ENCODE measurements at regions of chr22 and their contacts with region 1.

Region 1: GRCh38 chr22:36387752-36388518 is at the start of gene MYH9:
- DNase-seq: peak; percentile 96 to 100 (median 100)

Region 2: DNA sequence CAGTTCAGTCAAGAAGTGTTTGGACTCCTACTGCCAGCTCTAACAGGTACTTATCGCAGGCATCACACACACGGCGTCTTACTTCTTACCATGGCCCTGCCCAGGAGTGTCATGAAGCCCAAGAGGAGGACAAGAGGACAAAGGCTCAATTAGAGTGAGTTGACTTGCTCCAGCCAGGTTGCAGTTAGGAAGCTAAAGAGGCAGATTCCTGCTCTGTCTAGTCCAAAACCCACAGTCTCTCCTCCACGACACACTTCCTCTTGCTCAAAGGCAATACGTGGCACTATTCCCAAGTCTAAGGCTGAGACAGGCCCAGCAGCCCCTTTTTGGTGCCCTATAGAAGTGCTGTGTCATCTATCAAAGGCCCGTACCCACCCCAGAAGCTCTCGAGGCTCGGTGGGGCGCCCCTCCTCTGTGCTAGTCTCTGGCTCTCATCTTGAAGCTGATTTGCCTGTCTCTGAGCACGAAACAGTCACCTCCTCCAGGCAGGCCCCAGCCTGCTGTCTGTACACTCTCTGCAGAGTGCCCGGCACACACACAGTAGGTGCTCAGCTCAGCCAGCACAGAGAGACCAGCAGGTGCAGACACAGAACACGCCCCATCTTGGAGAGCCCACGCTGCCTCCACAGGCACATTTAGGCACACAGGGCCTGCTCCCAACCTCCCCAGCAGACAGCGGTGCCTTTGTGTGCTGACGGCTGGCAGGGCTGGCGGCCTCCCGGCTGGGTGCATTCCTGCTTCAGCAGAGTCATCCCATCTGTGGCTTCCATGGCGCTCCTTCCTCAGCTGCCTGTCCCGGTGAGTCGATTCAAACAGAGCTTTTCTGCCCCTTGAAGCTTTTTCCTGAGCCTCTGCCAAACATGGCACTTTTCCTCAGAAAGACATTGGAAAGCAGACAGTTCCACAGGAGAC is 53.0 kb before region 1 on chr22:
- intact Hi-C with region 1: loop called (anchors 5 kb)
- DNase-seq: peak; percentile 70 to 92 (median 84)

Region 3: DNA sequence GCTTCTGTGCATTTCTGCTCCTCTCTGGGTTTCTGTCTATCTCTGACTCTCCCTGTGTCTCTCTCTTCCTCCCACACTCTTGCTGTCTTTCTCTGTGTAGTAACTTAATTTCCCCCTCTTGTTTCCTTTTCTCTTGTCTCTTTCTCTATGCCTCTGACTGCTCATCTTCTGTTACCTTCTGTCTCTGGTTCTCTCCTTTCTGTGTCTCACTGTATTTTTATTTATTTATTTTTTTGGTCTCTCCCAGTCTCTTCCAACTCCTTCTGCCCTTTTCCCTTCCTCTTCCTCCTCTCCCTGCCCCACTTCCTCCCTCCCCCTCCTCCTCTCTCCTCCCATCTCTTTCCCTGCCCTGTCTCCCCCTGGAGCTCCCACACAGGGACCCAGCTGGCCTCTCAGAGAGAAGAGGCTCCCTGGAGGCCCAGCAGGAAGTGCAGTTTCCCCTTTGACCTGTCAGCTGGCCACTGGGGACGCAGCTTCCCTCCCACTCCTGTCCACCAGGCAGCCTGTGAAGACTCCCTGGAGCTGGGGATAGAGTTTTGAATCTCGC is 38.1 kb after region 1 on chr22:
- intact Hi-C with region 1: no loop called
- DNase-seq: peak in 4 of 42 donors; percentile 9 to 47 (median 34)

Region 4: DNA sequence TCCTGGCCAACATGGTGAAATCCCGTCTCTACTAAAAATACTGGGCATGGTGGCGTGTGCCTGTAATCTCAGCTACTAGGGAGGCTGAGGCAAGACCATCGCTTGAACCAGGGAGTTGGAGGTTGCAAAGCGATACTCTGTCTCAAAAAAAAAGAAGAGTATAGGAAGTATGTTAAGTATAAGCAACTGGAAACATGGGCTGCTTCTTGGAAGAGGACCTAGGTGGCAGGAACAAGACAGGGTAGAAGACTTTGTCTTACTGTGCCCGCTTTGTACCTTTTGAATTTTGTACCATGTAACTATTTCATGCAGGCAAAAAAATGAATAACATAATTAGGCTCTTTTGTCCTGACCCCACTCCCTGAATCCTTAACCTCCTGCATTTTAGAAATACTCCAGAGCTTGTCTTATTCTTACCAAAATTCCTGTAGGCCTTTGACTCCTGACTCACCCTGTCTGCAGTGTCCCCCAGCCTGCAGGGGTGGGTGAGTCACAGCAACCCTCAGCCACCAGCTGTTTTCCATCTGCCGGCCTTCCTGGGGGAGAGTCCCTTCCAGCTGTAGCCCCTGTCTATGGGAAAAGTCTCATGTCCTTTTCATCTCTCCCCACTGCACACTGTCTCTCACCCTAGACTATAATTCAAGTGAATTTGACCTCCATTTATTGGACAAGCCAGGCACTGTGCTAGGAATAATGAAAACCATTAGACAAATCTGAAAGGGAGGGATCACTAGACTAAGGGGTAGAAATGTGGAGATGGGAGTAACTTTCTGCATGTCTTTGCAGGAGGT is 51.7 kb after region 1 on chr22:
- intact Hi-C with region 1: no loop called
- DNase-seq: no peak